ENCODE measurements at regions of chr6 and their contacts with region 1.

Region 1: GRCh38 chr6:21022343-21023107 is 488.3 kb downstream of the CDKAL1 start:
- DNase-seq: peak; percentile 20
- ATAC-seq: peak; percentile 85
- H3K4me3 Mint-ChIP-seq: peak overlapping the region; percentile 58
- H3K27ac Mint-ChIP-seq: peak overlapping the region; percentile 87
- H3K4me1 Mint-ChIP-seq: peaks cover 20% of the 10 kb centered on the region
- H3K27me3 Mint-ChIP-seq: no peaks in the 10 kb centered on the region
- CTCF ChIP-seq: no peak

Region 2: DNA sequence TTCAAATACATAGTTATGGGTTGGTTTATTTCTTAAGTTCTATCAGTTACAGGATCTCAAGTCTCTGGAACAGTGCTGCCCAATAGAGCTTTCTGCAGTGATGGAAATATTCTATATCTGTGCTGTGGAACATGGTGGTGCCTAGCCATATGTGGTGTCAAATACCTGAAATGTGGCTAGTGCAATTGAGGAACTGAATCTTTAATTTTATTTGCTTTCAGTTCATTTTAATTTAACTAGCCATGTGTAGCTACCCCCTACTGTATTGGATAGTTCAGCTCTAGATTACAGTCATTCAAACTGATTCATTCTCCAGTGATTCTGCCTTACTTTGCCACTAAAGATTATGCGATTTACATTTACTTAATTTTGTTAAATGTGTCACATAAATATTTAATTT is 14.9 kb after region 1 on chr6:
- CTCF ChIA-PET with region 1: no interaction called
- POLR2A ChIA-PET with region 1: interaction called, 4 read pairs
- intact Hi-C with region 1: loop called (anchors 1 kb)
- DNase-seq: no peak
- ATAC-seq: peak; percentile 90
- H3K4me3 Mint-ChIP-seq: no peak overlapping the region
- H3K27ac Mint-ChIP-seq: no peak overlapping the region
- H3K4me1 Mint-ChIP-seq: peaks cover 18% of the 10 kb centered on the region
- H3K27me3 Mint-ChIP-seq: no peaks in the 10 kb centered on the region
- CTCF ChIP-seq: no peak

Region 3: GRCh38 chr6:21438237-21438985 is 415.9 kb after region 1 on chr6:
- CTCF ChIA-PET with region 1: no interaction called
- POLR2A ChIA-PET with region 1: no interaction called
- intact Hi-C with region 1: loop called (anchors 2 kb)
- DNase-seq: no peak
- ATAC-seq: peak; percentile 89
- H3K4me3 Mint-ChIP-seq: peak overlapping the region; percentile 72
- H3K27ac Mint-ChIP-seq: peak overlapping the region; percentile 87
- H3K4me1 Mint-ChIP-seq: peaks cover 20% of the 10 kb centered on the region
- H3K27me3 Mint-ChIP-seq: no peaks in the 10 kb centered on the region
- CTCF ChIP-seq: no peak

Measured in activated B cell treated with CpG ODN at 0.5 μM for 24 hours (primary cell).